A549 (cell line): ENCODE measurements at regions of chr12 and their contacts with region 1.

Region 1: DNA sequence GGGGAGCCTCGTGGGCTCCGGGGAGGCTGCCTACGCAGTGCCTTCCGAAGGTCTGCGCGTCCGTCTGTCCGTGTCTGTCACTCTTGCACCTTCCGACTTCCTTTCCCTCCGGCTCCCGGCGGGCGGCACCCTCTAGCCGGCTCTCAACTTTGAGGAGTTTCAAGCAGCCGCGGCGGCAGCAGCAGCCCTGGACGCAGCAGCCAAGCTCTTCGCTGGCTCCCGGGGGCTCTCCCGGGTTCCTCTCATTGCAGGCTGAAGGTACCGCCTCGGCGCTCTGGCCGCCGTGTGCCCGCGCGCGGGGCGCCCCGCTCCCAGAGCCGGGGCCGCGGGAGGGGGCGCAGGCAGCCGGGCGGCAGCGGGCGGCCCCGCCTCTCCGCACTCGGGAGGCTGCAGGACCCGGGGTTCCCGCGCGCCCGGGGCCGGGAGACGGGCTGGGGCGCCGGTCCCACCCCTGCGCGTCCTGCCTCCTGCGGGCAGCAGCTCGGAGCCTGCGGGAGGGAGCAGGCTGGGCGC is at the starts of genes AMIGO2 and PCED1B:
- DNase-seq: peak in 1 of 2 experiments; percentile 76
- ATAC-seq: peak; percentile 1 to 49
- H3K4me3 ChIP-seq: peak within 1 kb of the TSS; percentile 74
- H3K27ac ChIP-seq: peak within 1 kb of the TSS; percentile 97 to 100
- H3K4me1 ChIP-seq: peaks cover 42% of the 10 kb centered on the region
- CTCF ChIP-seq: no peak
- EP300 ChIP-seq: no peak; a peak in 1 of 5 replicates
- POLR2A ChIP-seq: 0 out of 2 replicates have a peak, but pooled peaks have one; percentile 28
- RAD21 ChIP-seq: peak; percentile 36 to 38; a peak in 4 of 5 replicates
- polyA plus RNA-seq, gene AMIGO2: 636 and 690 TPM in 2 replicates
- polyA plus RNA-seq, gene PCED1B: 74.6 and 92.2 TPM in 2 replicates

Region 2: GRCh38 chr12:47004634-47005033 is 74.9 kb before region 1 on chr12:
- CTCF ChIA-PET with region 1: no interaction called
- POLR2A ChIA-PET with region 1: no interaction called
- DNase-seq: no peak
- ATAC-seq: no peak
- H3K4me3 ChIP-seq: no peak overlapping the region
- H3K27ac ChIP-seq: no peak overlapping the region
- H3K4me1 ChIP-seq: no peaks in the 10 kb centered on the region
- CTCF ChIP-seq: no peak
- EP300 ChIP-seq: no peak
- POLR2A ChIP-seq: no peak
- RAD21 ChIP-seq: no peak

Region 3: DNA sequence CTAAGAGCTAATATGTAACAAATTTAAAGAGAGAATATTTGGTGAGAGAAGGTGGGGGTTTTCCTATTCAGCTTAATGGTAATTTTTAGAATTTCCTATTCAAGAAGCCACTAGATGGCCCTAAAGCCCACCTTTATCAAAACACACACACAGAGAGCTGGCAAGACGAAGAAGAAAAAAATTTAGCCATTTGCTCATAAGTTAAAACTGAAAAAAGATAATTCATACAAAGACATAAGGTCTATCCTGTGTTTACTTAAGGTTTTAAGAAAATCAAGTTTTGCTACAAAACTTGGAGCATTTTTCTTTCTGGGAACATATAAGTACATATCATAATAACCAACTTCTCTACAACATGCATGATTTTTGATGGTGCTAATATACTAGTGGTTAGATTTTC is 46.9 kb before region 1 on chr12:
- CTCF ChIA-PET with region 1: interaction called, 25 read pairs
- POLR2A ChIA-PET with region 1: interaction called, 18 read pairs
- DNase-seq: peak in 1 of 2 experiments; percentile 85
- ATAC-seq: peak; percentile 59 to 80; a peak in 4 of 6 replicates
- H3K4me3 ChIP-seq: no peak overlapping the region
- H3K27ac ChIP-seq: peak overlapping the region; percentile 88 to 93
- H3K4me1 ChIP-seq: peaks cover 50% of the 10 kb centered on the region
- CTCF ChIP-seq: peak; percentile 93
- EP300 ChIP-seq: no peak
- POLR2A ChIP-seq: no peak
- RAD21 ChIP-seq: peak; percentile 92 to 97

Region 4: GRCh38 chr12:47105704-47106667 is 26.5 kb after region 1 on chr12:
- CTCF ChIA-PET with region 1: no interaction called
- POLR2A ChIA-PET with region 1: no interaction called
- DNase-seq: no peak
- ATAC-seq: no peak
- H3K4me3 ChIP-seq: no peak overlapping the region
- H3K27ac ChIP-seq: peak overlapping the region in 1 of 2 experiments; percentile 71; a peak in 3 of 6 replicates
- H3K4me1 ChIP-seq: peaks cover 32% of the 10 kb centered on the region
- CTCF ChIP-seq: no peak
- EP300 ChIP-seq: no peak
- POLR2A ChIP-seq: no peak
- RAD21 ChIP-seq: no peak

Region 5: GRCh38 chr12:47218191-47218654 is 138.7 kb after region 1 on chr12:
- CTCF ChIA-PET with region 1: interaction called, 6 read pairs
- POLR2A ChIA-PET with region 1: interaction called, 156 read pairs
- DNase-seq: no peak
- ATAC-seq: no peak
- H3K4me3 ChIP-seq: no peak overlapping the region
- H3K27ac ChIP-seq: peak overlapping the region; percentile 98 to 99
- H3K4me1 ChIP-seq: peaks cover 76% of the 10 kb centered on the region
- CTCF ChIP-seq: no peak
- EP300 ChIP-seq: no peak
- POLR2A ChIP-seq: no peak
- RAD21 ChIP-seq: no peak

Region 6: GRCh38 chr12:47270782-47271664 is 191.5 kb after region 1 on chr12:
- CTCF ChIA-PET with region 1: interaction called, 4 read pairs
- POLR2A ChIA-PET with region 1: interaction called, 20 read pairs
- DNase-seq: peak; percentile 73 to 98
- ATAC-seq: peak; percentile 94
- H3K4me3 ChIP-seq: no peak overlapping the region
- H3K27ac ChIP-seq: peak overlapping the region; percentile 91 to 100
- H3K4me1 ChIP-seq: peaks cover 58% of the 10 kb centered on the region
- CTCF ChIP-seq: no peak
- EP300 ChIP-seq: peak; percentile 97
- POLR2A ChIP-seq: no peak
- RAD21 ChIP-seq: peak; percentile 56 to 58; a peak in 4 of 5 replicates

Region 7: DNA sequence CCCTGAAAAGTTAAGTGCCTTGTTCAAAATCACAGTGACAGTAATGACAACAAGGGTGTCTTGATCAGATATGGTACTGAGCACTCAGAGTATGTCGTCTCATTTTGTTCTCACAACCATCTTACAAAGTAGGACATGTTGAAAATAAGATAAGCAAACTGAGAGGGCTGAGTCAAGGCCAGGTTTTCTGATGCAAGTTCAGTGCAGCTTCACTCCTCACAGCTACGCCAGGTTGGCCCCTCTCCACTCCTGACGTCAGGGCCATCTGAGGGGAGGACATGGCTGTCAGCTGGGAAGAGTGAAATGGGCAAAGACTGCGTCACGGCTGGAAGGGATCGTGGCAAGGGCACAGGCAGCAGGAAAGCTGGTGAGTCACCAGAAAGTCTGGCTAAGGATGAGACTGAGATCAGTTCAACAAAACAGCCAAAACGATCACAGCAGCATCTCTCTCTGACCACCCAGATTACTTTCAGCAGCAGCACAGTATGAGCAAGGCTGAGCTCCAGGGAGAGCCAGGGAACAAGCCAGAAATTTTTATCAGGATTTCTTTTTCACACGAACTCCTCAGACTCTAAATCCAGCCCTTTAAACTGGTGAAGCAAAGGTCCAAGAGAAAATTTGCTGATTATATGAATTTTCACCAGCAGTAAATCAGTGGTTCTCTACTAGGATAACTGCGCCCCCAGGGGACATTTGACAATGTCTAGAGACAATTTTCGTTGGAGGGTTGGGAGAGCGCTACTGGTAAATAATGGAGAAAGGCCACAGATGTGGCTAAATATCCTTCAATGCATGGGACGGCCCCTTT is 298.1 kb after region 1 on chr12:
- CTCF ChIA-PET with region 1: interaction called, 3 read pairs
- POLR2A ChIA-PET with region 1: interaction called, 16 read pairs
- DNase-seq: peak; percentile 90 to 99
- ATAC-seq: peak; percentile 96 to 100
- H3K4me3 ChIP-seq: no peak overlapping the region
- H3K27ac ChIP-seq: peak overlapping the region; percentile 89 to 95
- H3K4me1 ChIP-seq: peaks cover 43% of the 10 kb centered on the region
- CTCF ChIP-seq: peak; percentile 49
- EP300 ChIP-seq: peak; percentile 99
- POLR2A ChIP-seq: no peak
- RAD21 ChIP-seq: peak; percentile 30 to 72